ENCODE measurements at regions of chr15 and their contacts with region 1.

Region 1: GRCh38 chr15:67575039-67575502 is 32.6 kb downstream of the MAP2K5 start:
- DNase-seq: no peak
- ATAC-seq: no peak
- H3K4me3 ChIP-seq: no peak overlapping the region
- H3K4me3 Mint-ChIP-seq: no peak overlapping the region
- H3K27ac ChIP-seq: no peak overlapping the region
- H3K27ac Mint-ChIP-seq: no peak overlapping the region
- H3K4me1 ChIP-seq: no peaks in the 10 kb centered on the region
- H3K4me1 Mint-ChIP-seq: no peaks in the 10 kb centered on the region
- H3K27me3 ChIP-seq: no peaks in the 10 kb centered on the region
- H3K27me3 Mint-ChIP-seq: no peaks in the 10 kb centered on the region
- CTCF ChIP-seq: no peak

Region 2: DNA sequence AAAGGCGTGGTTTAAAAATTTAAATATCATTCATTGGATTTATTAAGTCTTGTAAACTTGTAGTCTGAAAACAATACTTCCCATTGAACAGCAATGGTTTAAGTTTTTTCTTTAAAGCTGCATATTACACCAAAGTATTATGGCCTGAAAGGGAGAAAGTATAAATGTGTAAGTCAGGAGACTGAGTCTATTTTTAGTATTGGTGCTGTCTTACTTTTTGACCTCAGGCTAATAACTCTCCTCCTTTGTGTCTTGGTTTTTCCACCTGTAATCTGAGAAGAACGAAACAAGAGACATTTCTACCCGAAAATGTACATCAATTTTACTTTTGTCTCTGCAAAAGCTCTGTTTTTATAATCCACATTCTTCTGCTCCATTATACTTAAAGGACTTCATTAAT is 46.6 kb before region 1 on chr15:
- CTCF ChIA-PET with region 1: no interaction called
- POLR2A ChIA-PET with region 1: no interaction called
- intact Hi-C with region 1: loop called in 1 of 2 experiments (anchors 5 kb)
- DNase-seq: no peak
- ATAC-seq: no peak
- H3K4me3 ChIP-seq: no peak overlapping the region
- H3K4me3 Mint-ChIP-seq: no peak overlapping the region
- H3K27ac ChIP-seq: no peak overlapping the region
- H3K27ac Mint-ChIP-seq: no peak overlapping the region
- H3K4me1 ChIP-seq: no peaks in the 10 kb centered on the region
- H3K4me1 Mint-ChIP-seq: peaks cover 11% of the 10 kb centered on the region
- H3K27me3 ChIP-seq: no peaks in the 10 kb centered on the region
- H3K27me3 Mint-ChIP-seq: no peaks in the 10 kb centered on the region
- CTCF ChIP-seq: no peak

Region 3: DNA sequence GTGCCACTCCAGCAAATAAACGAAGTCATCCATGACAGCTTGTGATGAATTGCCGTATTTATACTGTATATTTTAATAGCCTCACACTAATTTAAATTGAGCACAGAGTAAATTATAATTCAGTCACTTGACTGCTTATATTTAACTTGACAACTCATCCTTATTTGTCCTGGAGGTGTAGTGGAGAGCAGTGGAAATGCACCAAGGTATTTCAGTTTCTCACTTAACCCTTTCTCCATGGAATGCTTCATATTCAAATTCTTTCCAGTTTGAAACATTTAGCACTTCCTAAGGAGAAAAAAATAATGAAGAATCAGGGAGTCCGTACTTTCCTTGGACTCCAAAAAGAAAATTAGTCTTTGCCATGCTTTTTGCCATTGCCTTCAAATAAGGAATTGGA is 66.4 kb after region 1 on chr15:
- CTCF ChIA-PET with region 1: no interaction called
- POLR2A ChIA-PET with region 1: no interaction called
- intact Hi-C with region 1: no loop called
- DNase-seq: no peak
- ATAC-seq: no peak
- H3K4me3 ChIP-seq: no peak overlapping the region
- H3K4me3 Mint-ChIP-seq: no peak overlapping the region
- H3K27ac ChIP-seq: no peak overlapping the region
- H3K27ac Mint-ChIP-seq: no peak overlapping the region
- H3K4me1 ChIP-seq: no peaks in the 10 kb centered on the region
- H3K4me1 Mint-ChIP-seq: no peaks in the 10 kb centered on the region
- H3K27me3 ChIP-seq: no peaks in the 10 kb centered on the region
- H3K27me3 Mint-ChIP-seq: no peaks in the 10 kb centered on the region
- CTCF ChIP-seq: no peak